Adrenal gland (tissue), 19 donors: ENCODE measurements at regions of chr1 and their contacts with region 1.

Region 1: GRCh38 chr1:91997607-91998195 is 32.1 kb upstream of the EPHX4 start:
- DNase-seq: peak; percentile 28 to 63 (median 43)
- H3K4me3 ChIP-seq: no peak overlapping the region
- H3K27ac ChIP-seq: no peak overlapping the region
- H3K4me1 ChIP-seq: no peaks in the 10 kb centered on the region
- H3K27me3 ChIP-seq: no peaks in the 10 kb centered on the region
- CTCF ChIP-seq: peak in 5 of 6 experiments; percentile 36 to 62 (median 57)
- POLR2A ChIP-seq: no peak

Region 2: GRCh38 chr1:92043621-92044020 is 45.9 kb after region 1 on chr1:
- intact Hi-C with region 1: no loop called
- DNase-seq: no peak
- H3K4me3 ChIP-seq: no peak overlapping the region
- H3K27ac ChIP-seq: no peak overlapping the region
- H3K4me1 ChIP-seq: no peaks in the 10 kb centered on the region
- H3K27me3 ChIP-seq: no peaks in the 10 kb centered on the region
- CTCF ChIP-seq: no peak
- POLR2A ChIP-seq: no peak

Region 3: GRCh38 chr1:92291372-92291999 is 293.8 kb after region 1 on chr1:
- intact Hi-C with region 1: loop called (anchors 5 to 10 kb)
- DNase-seq: peak in 1 of 7 donors; percentile 34
- H3K4me3 ChIP-seq: no peak overlapping the region
- H3K27ac ChIP-seq: no peak overlapping the region
- H3K4me1 ChIP-seq: no peaks in the 10 kb centered on the region
- H3K27me3 ChIP-seq: no peaks in the 10 kb centered on the region
- CTCF ChIP-seq: peak; percentile 44 to 74 (median 67)
- POLR2A ChIP-seq: no peak

Region 4: GRCh38 chr1:92298573-92299476 is 301.1 kb after region 1 on chr1 and contains the starts of genes GLMN and RPAP2:
- intact Hi-C with region 1: loop called (anchors 5 to 10 kb)
- DNase-seq: peak; percentile 73 to 84 (median 82)
- H3K4me3 ChIP-seq: peak within 1 kb of the TSS; percentile 18 to 81 (median 75)
- H3K27ac ChIP-seq: peak within 1 kb of the TSS; percentile 72 to 96 (median 92)
- H3K4me1 ChIP-seq: peaks cover 6 to 26% of the 10 kb centered on the region in 2 donors
- H3K27me3 ChIP-seq: no peaks in the 10 kb centered on the region
- CTCF ChIP-seq: peak in 1 of 6 experiments; percentile 22
- POLR2A ChIP-seq: peak; percentile 53 to 86
- total RNA-seq, gene GLMN: 1.1 to 15.1 (median 5.9) TPM
- total RNA-seq, gene RPAP2: 2.3 to 29.0 (median 16.5) TPM